ENCODE measurements at regions of chr5 and their contacts with region 1.

Region 1: DNA sequence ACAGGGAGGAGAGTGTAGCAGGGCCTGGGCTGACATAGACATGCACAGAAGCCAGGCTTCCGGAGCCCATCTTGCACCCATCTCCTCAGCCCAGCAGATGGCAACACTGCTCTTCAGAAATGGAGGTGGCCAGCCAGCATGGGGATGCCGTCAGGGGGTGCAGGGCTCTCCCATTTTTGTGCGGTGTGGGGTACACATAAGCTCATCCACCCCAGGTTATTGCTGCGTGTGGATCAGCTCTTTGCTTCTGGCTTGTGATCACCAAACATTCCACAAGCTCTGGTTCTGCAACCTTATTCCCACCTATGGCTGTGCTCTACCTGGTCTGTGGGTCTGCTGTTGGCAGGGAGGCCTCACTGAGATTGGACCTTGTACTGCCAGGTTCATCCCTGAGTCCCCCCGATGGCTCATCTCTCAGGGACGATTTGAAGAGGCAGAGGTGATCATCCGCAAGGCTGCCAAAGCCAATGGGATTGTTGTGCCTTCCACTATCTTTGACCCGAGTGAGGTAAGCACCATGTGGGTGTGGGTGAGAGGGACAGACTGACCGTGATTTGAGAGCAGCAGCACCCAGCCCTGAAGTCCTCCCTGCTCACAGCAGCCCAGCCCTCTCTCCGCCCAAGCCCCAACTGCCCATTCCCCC is 17.3 kb downstream of the SLC22A5 start:
- DNase-seq: peak; percentile 80 to 81
- ATAC-seq: peak; percentile 66 to 82
- H3K4me3 ChIP-seq: no peak overlapping the region
- H3K27ac ChIP-seq: peak overlapping the region; percentile 92 to 94
- H3K4me1 ChIP-seq: peaks cover 66% of the 10 kb centered on the region
- CTCF ChIP-seq: peak; percentile 91
- EP300 ChIP-seq: no peak
- POLR2A ChIP-seq: no peak
- RAD21 ChIP-seq: peak; percentile 96

Region 2: GRCh38 chr5:131550606-131551005 is 836.2 kb before region 1 on chr5:
- CTCF ChIA-PET with region 1: no interaction called
- POLR2A ChIA-PET with region 1: no interaction called
- DNase-seq: no peak
- ATAC-seq: no peak
- H3K4me3 ChIP-seq: no peak overlapping the region
- H3K27ac ChIP-seq: no peak overlapping the region
- H3K4me1 ChIP-seq: peaks cover 12% of the 10 kb centered on the region
- CTCF ChIP-seq: no peak
- EP300 ChIP-seq: no peak
- POLR2A ChIP-seq: no peak
- RAD21 ChIP-seq: no peak

Region 3: DNA sequence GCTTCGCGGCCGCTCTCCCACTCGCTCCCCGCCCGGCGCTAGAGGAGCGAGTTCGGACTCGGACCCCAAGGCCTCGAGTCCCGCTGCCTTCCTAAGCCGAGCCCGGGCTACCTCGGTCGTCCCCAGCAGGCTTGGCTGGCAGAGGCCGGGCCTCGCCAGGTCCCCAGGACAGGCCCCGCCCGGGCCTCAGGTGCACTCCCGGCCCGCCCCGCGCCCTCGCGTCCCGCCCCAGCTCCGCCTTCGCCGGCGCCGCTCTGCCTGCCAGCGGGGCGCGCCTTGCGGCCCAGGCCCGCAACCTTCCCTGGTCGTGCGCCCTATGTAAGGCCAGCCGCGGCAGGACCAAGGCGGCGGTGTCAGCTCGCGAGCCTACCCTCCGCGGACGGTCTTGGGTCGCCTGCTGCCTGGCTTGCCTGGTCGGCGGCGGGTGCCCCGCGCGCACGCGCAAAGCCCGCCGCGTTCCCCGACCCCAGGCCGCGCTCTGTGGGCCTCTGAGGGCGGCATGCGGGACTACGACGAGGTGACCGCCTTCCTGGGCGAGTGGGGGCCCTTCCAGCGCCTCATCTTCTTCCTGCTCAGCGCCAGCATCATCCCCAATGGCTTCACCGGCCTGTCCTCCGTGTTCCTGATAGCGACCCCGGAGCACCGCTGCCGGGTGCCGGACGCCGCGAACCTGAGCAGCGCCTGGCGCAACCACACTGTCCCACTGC is 17.1 kb before region 1 on chr5 and contains the start of gene SLC22A5:
- CTCF ChIA-PET with region 1: interaction called, 98 read pairs
- POLR2A ChIA-PET with region 1: interaction called, 5 read pairs
- DNase-seq: peak; percentile 62 to 84
- ATAC-seq: peak; percentile 82 to 85
- H3K4me3 ChIP-seq: peak within 1 kb of the TSS; percentile 87
- H3K27ac ChIP-seq: peak within 1 kb of the TSS; percentile 92 to 93
- H3K4me1 ChIP-seq: peaks cover 68% of the 10 kb centered on the region
- CTCF ChIP-seq: no peak
- EP300 ChIP-seq: no peak
- POLR2A ChIP-seq: peak; percentile 65
- RAD21 ChIP-seq: no peak; a peak in 1 of 5 replicates
- polyA plus RNA-seq, gene SLC22A5: 35.3 and 44.8 TPM in 2 replicates

Region 4: DNA sequence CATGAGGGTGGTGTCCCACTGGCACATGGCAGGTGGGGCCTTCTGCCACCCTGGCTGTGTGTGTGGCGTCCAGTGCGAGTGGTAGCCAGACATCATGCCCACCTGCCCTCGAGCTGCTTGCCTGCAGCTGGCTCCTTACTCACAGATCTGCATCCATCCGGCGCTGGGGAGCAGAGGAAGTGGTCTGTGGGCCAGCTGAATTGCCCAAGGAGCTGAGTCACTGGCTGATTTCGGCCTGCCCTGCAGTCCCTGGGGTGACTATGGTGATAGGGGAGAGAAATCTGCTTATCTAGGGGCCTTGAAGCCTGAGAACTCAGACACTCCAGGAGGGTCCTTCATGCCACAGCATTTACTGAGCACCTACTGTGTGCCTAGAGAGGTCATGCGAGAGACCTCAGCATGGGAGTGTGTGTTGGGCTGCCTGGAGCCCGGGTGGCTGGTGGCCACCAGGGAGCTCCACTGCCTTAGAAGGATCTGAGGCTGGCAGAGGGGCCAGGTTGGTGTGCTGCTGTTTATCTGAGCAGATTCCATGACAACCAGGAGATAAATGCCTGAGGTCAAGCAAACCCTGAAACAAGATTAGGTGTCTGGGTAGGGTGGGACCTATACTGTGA is 39.9 kb after region 1 on chr5:
- CTCF ChIA-PET with region 1: interaction called, 26 read pairs
- POLR2A ChIA-PET with region 1: no interaction called
- DNase-seq: peak; percentile 46 to 65
- ATAC-seq: peak; percentile 66 to 80
- H3K4me3 ChIP-seq: no peak overlapping the region
- H3K27ac ChIP-seq: peak overlapping the region; percentile 67 to 84
- H3K4me1 ChIP-seq: peaks cover 60% of the 10 kb centered on the region
- CTCF ChIP-seq: peak; percentile 20; the same call in 2 of the 3 replicates
- EP300 ChIP-seq: no peak
- POLR2A ChIP-seq: no peak
- RAD21 ChIP-seq: peak in 1 of 2 experiments; percentile 17; a peak in 1 of 5 replicates

Region 5: GRCh38 chr5:132484391-132484725 is 97.6 kb after region 1 on chr5:
- CTCF ChIA-PET with region 1: interaction called, 12 read pairs
- POLR2A ChIA-PET with region 1: no interaction called
- DNase-seq: no peak
- ATAC-seq: no peak
- H3K4me3 ChIP-seq: no peak overlapping the region
- H3K27ac ChIP-seq: no peak overlapping the region
- H3K4me1 ChIP-seq: peaks cover 10% of the 10 kb centered on the region; the same call in 2 of the 3 replicates
- CTCF ChIP-seq: no peak
- EP300 ChIP-seq: no peak
- POLR2A ChIP-seq: no peak
- RAD21 ChIP-seq: no peak

Region 6: GRCh38 chr5:132500931-132501630 is 114.3 kb after region 1 on chr5:
- CTCF ChIA-PET with region 1: interaction called, 217 read pairs
- POLR2A ChIA-PET with region 1: interaction called, 49 read pairs
- DNase-seq: peak; percentile 51 to 71
- ATAC-seq: peak in 1 of 2 experiments; percentile 29; a peak in 3 of 6 replicates
- H3K4me3 ChIP-seq: no peak overlapping the region
- H3K27ac ChIP-seq: peak overlapping the region; percentile 37 to 97; a peak in 4 of 6 replicates
- H3K4me1 ChIP-seq: peaks cover 41% of the 10 kb centered on the region
- CTCF ChIP-seq: peak; percentile 89
- EP300 ChIP-seq: no peak
- POLR2A ChIP-seq: no peak
- RAD21 ChIP-seq: peak; percentile 94 to 96

Region 7: GRCh38 chr5:132820162-132820754 is 433.5 kb after region 1 on chr5:
- CTCF ChIA-PET with region 1: interaction called, 29 read pairs
- POLR2A ChIA-PET with region 1: no interaction called
- DNase-seq: peak; percentile 90
- ATAC-seq: peak; percentile 84 to 96
- H3K4me3 ChIP-seq: no peak overlapping the region
- H3K27ac ChIP-seq: peak overlapping the region in 1 of 2 experiments; percentile 49; a peak in 1 of 6 replicates
- H3K4me1 ChIP-seq: 0 out of 3 replicates have a peak, but pooled peaks cover 3% of the 10 kb centered on the region
- CTCF ChIP-seq: peak; percentile 93
- EP300 ChIP-seq: no peak
- POLR2A ChIP-seq: no peak
- RAD21 ChIP-seq: peak; percentile 84 to 87

Measured in A549 (cell line).